Transverse colon (tissue), 4 donors: ENCODE measurements at regions of chr18 and their contacts with region 1.

Region 1: DNA sequence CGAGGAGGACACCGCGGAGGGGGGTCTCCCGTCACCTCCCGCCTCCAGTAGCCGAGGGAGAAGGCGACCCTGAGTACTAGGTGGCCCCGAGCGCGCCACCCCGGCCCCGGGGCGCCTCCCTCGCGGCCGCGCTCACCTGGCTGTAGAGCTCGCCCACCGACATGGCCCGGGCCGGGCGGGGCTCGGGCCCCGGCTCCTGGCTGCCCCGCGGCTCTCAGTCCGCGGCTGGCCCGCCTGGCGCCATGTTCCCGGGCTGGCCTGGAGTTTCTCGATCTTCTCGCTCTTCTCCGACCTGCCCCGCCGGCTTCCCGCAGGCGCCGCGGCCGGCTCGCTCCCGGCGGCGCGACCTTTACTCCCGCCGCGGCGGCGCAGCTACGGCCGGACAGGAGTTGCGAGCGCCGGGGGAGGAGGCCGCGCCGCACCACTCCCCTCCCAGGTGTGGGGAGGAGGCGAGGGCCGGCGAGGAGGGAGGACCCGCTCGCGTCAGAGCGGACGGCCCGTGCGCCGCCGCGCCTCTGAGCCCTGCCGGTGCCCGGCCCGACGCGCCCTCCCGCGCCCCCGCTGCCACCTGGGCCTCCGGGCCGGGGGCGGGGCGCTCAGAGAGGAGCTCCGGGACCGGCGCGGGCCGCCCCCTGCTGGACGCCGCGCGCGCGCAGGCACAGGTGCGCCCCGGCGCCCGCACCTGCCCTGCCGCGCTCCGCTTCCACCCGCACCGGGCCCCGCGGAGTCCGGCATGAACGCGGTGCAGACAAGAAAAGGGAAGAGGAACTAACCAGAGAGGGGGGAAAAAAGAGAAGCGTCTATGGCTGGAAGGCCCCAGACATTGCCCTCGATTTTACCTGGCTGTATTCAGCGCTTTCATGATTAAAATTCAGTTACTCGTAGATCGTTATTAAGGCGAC is at the start of gene MYO5B:
- DNase-seq: peak; percentile 91
- H3K4me3 ChIP-seq: peak within 1 kb of the TSS; percentile 57 to 89 (median 72)
- H3K27ac ChIP-seq: peak within 1 kb of the TSS; percentile 72 to 95 (median 92)
- H3K4me1 ChIP-seq: peaks cover 0 to 30% (median 9%) of the 10 kb centered on the region in 4 donors
- H3K27me3 ChIP-seq: peaks cover 52% of the 10 kb centered on the region
- CTCF ChIP-seq: peak; percentile 13 to 39 (median 36)
- EP300 ChIP-seq: no peak
- POLR2A ChIP-seq: peak; percentile 84
- total RNA-seq, gene MYO5B: 96.7 to 144 (median 114) TPM

Region 2: DNA sequence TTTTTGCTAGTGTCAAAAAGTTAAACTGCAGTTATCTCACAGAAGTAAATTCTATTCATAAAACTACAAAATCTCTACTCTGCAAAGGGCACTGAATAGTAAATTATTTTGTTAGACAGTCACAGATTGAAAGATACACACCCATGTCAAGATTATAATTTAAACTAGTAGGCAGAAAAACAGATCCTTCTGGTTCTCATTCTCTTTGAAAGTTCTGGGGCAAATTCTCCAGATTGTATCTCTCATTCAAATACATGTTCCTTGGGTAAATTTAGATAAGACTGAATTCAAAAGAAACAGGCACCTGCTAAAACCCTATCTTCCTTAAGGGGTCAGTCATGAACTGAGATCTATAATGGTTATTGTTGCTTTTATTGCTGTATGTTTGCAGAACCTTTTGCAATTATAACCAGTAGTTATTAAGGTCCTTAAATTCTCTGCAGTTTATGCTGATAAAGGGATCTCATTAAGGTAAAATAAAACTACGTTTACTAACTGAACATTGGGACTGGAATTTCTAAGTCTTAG is 83.6 kb before region 1 on chr18:
- in situ Hi-C with region 1: loop called in 1 of 4 experiments (anchors 10 kb)
- intact Hi-C with region 1: no loop called
- DNase-seq: no peak
- H3K4me3 ChIP-seq: no peak overlapping the region
- H3K27ac ChIP-seq: peak overlapping the region in 1 of 4 donors; percentile 17
- H3K4me1 ChIP-seq: peaks cover 0 to 13% (median 8%) of the 10 kb centered on the region in 4 donors
- H3K27me3 ChIP-seq: no peaks in the 10 kb centered on the region
- CTCF ChIP-seq: peak in 4 of 5 experiments; percentile 17 to 54 (median 38)
- EP300 ChIP-seq: no peak
- POLR2A ChIP-seq: no peak